Right ventricle myocardium inferior (tissue), 1 donor: ENCODE measurements at regions of chr20 and their contacts with region 1.

Region 1: DNA sequence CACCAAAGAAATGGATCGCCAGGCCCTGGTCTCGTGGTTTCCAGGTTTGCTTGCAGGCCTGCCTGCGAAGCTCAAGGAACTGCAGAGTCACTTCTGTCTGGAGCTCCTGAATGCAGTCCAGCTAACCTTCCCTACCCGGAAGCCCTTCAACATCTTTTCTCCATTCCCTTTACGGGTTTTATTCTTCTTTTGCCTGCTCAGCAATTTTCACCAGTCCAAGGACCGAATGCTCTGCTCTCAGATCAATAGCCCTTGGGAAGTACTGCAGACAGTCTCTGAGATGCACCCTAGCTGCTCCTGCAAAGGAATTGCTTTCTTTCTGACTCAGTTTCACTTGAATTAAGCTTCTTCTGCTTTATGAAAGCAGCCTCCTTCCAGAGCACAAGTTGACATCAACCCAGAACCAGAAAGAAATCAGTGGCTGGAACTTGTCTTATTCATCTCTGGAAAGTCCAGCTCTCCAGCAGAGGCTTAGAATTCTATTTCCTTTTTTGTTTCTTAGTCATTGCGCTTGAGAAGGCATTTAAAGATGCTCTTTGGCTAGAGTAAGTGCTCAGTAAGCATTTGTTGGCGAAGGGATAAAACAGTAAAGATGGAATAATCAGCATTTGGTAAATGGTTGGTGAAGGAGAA is 18.7 kb upstream of the YWHAB start:
- DNase-seq: no peak
- ATAC-seq: no peak

Region 2: GRCh38 chr20:44750081-44750805 is 116.6 kb before region 1 on chr20:
- intact Hi-C with region 1: loop called (anchors 2 kb)
- DNase-seq: no peak
- ATAC-seq: no peak

Region 3: DNA sequence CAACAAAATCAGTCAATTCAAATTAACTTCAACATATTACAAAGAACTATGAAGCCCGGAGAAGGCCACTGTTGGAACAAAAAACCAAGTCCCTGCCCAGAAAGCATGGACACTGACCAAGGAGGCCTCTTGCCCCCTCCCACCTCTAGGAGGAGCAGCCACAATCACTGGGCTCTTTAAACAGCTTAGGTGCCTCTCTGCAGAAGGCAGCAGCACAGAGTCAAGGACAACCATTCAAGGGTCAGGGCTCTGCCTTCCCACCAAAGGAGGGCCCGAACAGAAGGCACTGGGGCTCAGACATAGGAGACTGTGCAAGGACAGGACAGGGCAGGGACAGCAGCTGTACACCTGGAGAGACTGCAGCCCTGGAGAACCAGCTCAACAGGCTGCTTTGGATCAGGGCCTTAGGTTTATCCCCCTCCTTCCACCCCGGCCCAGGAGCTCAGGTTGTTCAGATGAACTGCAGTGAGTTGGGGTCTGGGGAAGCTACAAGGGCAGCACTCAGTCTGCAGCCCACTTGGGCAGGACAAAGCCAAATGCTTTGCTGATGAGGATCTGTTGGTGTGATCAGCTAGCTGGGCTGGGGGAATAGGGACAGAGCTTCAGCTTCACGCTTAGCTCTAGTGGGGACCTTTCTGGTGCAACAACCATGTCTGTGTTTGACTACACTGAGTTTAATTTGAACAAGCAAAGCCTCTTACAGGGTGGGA is 75.6 kb after region 1 on chr20:
- intact Hi-C with region 1: no loop called
- DNase-seq: no peak
- ATAC-seq: no peak

Region 4: GRCh38 chr20:45014671-45015415 is 148.0 kb after region 1 on chr20:
- intact Hi-C with region 1: no loop called
- DNase-seq: no peak
- ATAC-seq: peak; percentile 36